HCT116 (cell line): ENCODE measurements at regions of chr2 and their contacts with region 1.

Region 1: GRCh38 chr2:9423100-9423921 is at the starts of genes CPSF3 and ITGB1BP1:
- DNase-seq: peak; percentile 94
- ATAC-seq: peak; percentile 88
- H3K4me3 ChIP-seq: peak within 1 kb of the TSS; percentile 57 to 99
- H3K27ac ChIP-seq: peak within 1 kb of the TSS; percentile 84
- H3K4me1 ChIP-seq: peaks cover 13 to 22% of the 10 kb centered on the region in 2 experiments; a peak in 3 of 4 replicates
- H3K27me3 ChIP-seq: no peaks in the 10 kb centered on the region
- CTCF ChIP-seq: no peak
- POLR2A ChIP-seq: peak; percentile 55
- RAD21 ChIP-seq: no peak
- total RNA-seq, gene CPSF3: 68.5 TPM
- total RNA-seq, gene ITGB1BP1: 86.9 TPM

Region 2: GRCh38 chr2:9178904-9179571 is 244.3 kb before region 1 on chr2:
- CTCF ChIA-PET with region 1: no interaction called
- POLR2A ChIA-PET with region 1: no interaction called
- RAD21 ChIA-PET with region 1: no interaction called
- intact Hi-C with region 1: no loop called
- DNase-seq: no peak
- ATAC-seq: peak; percentile 56
- H3K4me3 ChIP-seq: peak overlapping the region; percentile 5 to 26; a peak in 3 of 4 replicates
- H3K27ac ChIP-seq: peak overlapping the region; percentile 35
- H3K4me1 ChIP-seq: peaks cover 31 to 49% of the 10 kb centered on the region in 2 experiments
- H3K27me3 ChIP-seq: no peaks in the 10 kb centered on the region
- CTCF ChIP-seq: no peak
- POLR2A ChIP-seq: no peak
- RAD21 ChIP-seq: no peak

Region 3: DNA sequence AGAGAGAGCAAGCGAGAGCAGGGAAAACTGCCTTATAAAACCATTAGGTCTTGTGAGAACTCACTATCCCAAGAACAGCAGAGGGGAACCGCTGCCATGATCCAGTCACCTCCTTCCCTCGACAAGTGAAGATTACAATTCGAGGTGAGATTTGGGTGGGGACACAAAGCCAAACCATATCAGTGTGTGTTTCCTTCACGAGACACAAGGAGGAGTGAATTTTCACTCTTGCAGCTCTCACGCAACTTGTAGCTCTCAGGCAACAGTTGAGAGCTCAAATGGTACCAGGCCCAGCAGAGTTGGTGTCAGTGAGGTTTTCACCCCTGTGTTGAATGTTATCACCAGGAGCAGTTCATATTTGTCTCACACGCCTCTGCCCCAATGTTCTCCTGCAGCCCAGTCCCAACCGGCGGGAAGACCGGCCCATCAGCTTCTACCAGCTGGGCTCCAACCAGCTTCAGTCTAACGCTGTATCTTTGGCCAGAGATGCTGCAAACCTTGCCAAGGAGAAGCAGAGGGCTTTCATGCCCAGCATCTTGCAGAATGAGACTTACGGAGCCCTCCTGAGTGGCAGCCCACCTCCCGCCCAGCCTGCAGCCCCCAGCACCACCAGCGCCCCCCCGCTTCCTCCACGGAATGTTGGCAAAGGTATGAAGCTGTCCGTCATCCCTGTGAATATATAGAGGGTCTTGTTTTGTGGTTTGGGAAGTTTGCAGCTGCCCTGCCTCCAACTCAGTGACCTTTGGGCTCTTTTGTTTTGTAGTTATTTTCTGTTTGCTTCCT is 35.2 kb before region 1 on chr2:
- CTCF ChIA-PET with region 1: no interaction called
- POLR2A ChIA-PET with region 1: interaction called, 4 read pairs
- RAD21 ChIA-PET with region 1: interaction called in 1 of 2 experiments, 3 read pairs
- intact Hi-C with region 1: loop called (anchors 1 kb)
- DNase-seq: no peak
- ATAC-seq: no peak
- H3K4me3 ChIP-seq: no peak overlapping the region
- H3K27ac ChIP-seq: peak overlapping the region; percentile 68
- H3K4me1 ChIP-seq: peaks cover 20 to 34% of the 10 kb centered on the region in 2 experiments
- H3K27me3 ChIP-seq: no peaks in the 10 kb centered on the region
- CTCF ChIP-seq: no peak
- POLR2A ChIP-seq: no peak
- RAD21 ChIP-seq: no peak

Region 4: DNA sequence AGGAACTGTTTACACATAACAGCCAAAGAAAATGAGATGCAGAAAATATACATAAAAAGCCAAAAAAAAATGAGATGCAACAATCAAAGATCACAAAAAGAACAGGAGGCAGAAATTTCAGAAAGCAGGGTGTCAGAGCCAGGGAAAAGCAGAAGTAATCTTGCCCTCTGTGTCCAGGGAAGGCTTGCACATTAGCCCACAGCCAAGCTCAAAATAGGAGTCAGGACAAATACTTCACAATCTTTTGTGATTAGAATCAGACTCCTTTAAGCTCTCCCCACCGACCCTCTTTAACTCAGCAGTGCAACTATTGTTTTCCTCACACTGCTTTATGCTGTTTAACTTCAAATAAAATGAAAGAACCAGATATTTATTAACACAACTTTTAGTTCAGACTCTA is 85.6 kb after region 1 on chr2:
- CTCF ChIA-PET with region 1: no interaction called
- POLR2A ChIA-PET with region 1: no interaction called
- RAD21 ChIA-PET with region 1: no interaction called
- intact Hi-C with region 1: no loop called
- DNase-seq: no peak
- ATAC-seq: no peak
- H3K4me3 ChIP-seq: no peak overlapping the region
- H3K27ac ChIP-seq: no peak overlapping the region
- H3K4me1 ChIP-seq: no peaks in the 10 kb centered on the region
- H3K27me3 ChIP-seq: no peaks in the 10 kb centered on the region
- CTCF ChIP-seq: no peak
- POLR2A ChIP-seq: no peak
- RAD21 ChIP-seq: no peak